CD4-positive, alpha-beta T cell (primary cell): ENCODE measurements at regions of chr10 and their contacts with region 1.

Region 1: DNA sequence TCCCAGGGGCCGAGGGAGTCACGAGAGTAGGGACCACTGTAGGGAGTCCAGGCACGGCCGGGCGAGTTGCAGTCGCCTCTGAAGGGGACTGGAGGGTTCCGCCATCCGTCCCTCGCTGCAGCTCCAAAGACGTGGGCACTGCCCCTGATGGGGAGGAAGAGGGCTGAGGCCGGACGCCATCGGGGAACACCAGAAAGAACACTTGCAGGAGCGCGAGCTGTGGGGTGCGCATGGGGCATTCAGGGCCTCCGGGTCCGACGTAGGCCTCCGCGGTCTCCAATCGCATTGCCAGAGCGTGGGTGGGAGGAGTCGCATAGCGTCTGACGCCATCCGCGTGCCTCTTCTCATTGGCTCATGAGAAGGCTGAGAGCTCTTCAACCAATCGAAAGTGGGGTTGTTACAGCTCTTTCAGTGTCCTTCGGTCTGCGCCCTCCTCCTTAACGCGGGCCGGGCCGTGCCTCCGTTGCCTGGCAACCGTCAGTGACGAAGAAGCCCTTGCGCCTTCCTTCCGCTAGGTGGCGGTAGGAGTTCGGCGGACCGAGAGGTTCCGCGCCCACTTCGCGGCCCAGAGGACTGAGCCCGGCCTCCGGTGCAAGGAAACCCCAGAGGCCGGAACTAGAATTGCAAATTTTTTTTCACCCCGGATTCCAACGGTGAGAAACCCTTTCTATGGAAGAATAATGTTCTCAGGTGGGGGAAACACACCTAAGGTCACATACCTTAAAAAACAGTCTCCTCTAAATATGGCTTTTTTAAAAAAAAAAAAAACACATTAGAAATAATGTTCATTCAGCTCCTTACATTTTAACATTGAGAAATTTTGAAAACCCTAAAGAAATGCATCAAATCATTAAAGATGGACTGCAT is at the start of gene TCTN3:
- DNase-seq: peak; percentile 89 to 100 (median 94)
- ATAC-seq: peak; percentile 95
- H3K4me3 ChIP-seq: peak within 1 kb of the TSS; percentile 68
- H3K4me3 Mint-ChIP-seq: peak within 1 kb of the TSS; percentile 98
- H3K27ac ChIP-seq: peak within 1 kb of the TSS; percentile 60 to 77
- H3K27ac Mint-ChIP-seq: peak within 1 kb of the TSS; percentile 94
- H3K4me1 ChIP-seq: peaks cover 19% of the 10 kb centered on the region
- H3K4me1 Mint-ChIP-seq: peaks cover 44% of the 10 kb centered on the region
- H3K27me3 ChIP-seq: no peaks in the 10 kb centered on the region
- H3K27me3 Mint-ChIP-seq: peaks cover 6% of the 10 kb centered on the region
- CTCF ChIP-seq: peak; percentile 99
- total RNA-seq, gene TCTN3: 18.6 to 20.2 TPM

Region 2: DNA sequence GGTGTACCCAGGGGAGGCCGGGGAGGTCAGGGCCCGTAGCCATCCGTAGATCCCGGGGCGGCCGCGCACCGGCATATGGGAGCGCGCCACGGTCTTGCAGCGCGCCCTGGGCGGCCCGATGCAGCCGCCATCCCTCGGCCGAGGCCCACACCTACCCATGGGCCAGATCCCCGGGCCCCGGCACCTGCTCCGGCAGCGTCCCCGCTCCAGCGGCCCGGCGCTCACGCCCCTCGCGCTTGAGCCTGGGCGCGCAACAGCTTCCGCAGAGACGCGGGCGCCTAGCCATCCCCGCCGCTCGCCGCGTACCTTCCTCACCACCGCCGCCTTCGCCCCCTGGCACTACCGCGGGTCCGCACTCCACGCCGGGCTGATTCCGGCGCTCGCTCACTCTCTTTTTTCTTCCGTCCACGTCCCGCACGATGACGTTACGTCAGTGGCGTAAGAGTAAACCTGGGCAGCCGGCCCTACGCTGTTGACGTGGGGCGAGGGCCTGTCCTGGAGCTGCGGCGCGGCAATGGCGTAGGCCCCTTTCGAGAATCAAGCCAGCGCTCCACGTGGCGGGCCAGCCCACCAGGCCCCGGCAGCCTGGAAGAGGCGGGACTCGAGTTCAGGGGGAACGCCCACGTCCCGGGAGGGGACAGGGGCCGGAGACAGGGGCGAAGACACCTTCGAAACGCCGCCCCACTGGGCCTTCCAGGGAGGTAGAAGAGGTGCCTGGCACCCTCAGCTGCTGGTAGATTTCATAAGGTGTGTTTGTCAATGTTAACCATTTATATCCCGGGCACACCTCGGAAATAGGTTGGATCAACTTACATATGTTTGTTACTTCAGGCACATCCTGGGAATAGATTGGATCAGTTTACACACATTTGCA is 37.4 kb before region 1 on chr10 and contains the start of gene ALDH18A1:
- CTCF ChIA-PET with region 1: interaction called, 9 read pairs
- POLR2A ChIA-PET with region 1: interaction called, 10 read pairs
- intact Hi-C with region 1: loop called (anchors 2 to 5 kb)
- DNase-seq: peak; percentile 79 to 95 (median 90)
- ATAC-seq: peak; percentile 90
- H3K4me3 ChIP-seq: peak within 1 kb of the TSS; percentile 70
- H3K4me3 Mint-ChIP-seq: peak within 1 kb of the TSS; percentile 100
- H3K27ac ChIP-seq: peak within 1 kb of the TSS in 1 of 2 donors; percentile 16
- H3K27ac Mint-ChIP-seq: peak within 1 kb of the TSS; percentile 86
- H3K4me1 ChIP-seq: peaks cover 18% of the 10 kb centered on the region
- H3K4me1 Mint-ChIP-seq: peaks cover 39% of the 10 kb centered on the region
- H3K27me3 ChIP-seq: no peaks in the 10 kb centered on the region
- H3K27me3 Mint-ChIP-seq: no peaks in the 10 kb centered on the region
- CTCF ChIP-seq: no peak
- total RNA-seq, gene ALDH18A1: 9.6 to 12.6 TPM

Region 3: GRCh38 chr10:95841661-95842498 is 148.0 kb after region 1 on chr10:
- CTCF ChIA-PET with region 1: interaction called, 32 read pairs
- POLR2A ChIA-PET with region 1: interaction called, 7 read pairs
- intact Hi-C with region 1: loop called (anchors 1 kb)
- DNase-seq: peak in 7 of 14 experiments; percentile 3 to 80 (median 51)
- ATAC-seq: peak; percentile 55
- H3K4me3 ChIP-seq: no peak overlapping the region
- H3K4me3 Mint-ChIP-seq: no peak overlapping the region
- H3K27ac ChIP-seq: no peak overlapping the region
- H3K27ac Mint-ChIP-seq: no peak overlapping the region
- H3K4me1 ChIP-seq: no peaks in the 10 kb centered on the region
- H3K4me1 Mint-ChIP-seq: peaks cover 6% of the 10 kb centered on the region
- H3K27me3 ChIP-seq: no peaks in the 10 kb centered on the region
- H3K27me3 Mint-ChIP-seq: no peaks in the 10 kb centered on the region
- CTCF ChIP-seq: peak; percentile 54

Region 4: DNA sequence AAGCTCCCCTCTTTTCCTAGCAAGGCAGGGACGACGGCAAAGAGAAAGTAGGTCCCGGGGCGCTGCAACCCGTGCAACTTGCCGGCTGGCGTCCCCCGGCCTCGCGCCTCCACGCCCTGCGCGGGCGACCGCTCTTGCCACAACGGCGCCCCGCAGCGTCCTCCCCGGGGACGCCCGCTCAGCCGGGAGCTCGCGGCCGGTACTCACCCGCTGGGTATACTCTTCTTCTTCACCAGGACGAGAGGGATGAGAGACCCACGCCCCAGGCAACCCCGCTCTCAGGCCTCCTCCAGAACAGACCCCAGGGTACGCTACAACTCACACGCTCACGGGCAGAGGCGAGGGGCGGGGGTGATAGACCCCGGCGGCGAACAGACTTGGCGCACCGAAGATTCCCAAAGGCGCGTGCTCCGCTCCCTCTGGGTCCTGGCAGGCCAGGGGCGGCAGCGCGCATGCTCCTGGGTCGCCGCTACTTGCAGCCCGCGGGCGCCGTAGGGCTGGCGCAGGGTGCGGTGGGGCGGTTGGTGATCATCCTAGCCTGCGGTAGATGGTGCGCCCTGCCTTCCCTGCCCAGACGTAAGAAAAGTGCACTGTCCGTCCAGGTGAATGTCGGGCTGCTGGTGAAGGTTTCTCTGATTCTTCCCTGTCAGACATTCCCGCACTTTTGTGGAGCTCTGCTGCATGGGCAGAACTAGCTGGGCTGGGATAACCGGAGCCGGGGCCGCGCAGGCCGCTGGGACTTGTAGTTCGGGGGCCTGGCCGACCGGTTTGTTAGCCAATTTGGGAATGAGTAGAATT is 213.8 kb after region 1 on chr10 and contains the start of gene CC2D2B:
- CTCF ChIA-PET with region 1: interaction called, 5 read pairs
- POLR2A ChIA-PET with region 1: interaction called, 14 read pairs
- intact Hi-C with region 1: loop called in 1 of 2 experiments (anchors 5 kb)
- DNase-seq: peak; percentile 24 to 75 (median 52)
- ATAC-seq: peak; percentile 80
- H3K4me3 ChIP-seq: peak within 1 kb of the TSS; percentile 83
- H3K4me3 Mint-ChIP-seq: peak within 1 kb of the TSS; percentile 86
- H3K27ac ChIP-seq: peak within 1 kb of the TSS; percentile 14 to 39
- H3K27ac Mint-ChIP-seq: peak within 1 kb of the TSS; percentile 39
- H3K4me1 ChIP-seq: peaks cover 3% of the 10 kb centered on the region
- H3K4me1 Mint-ChIP-seq: peaks cover 12% of the 10 kb centered on the region
- H3K27me3 ChIP-seq: no peaks in the 10 kb centered on the region
- H3K27me3 Mint-ChIP-seq: no peaks in the 10 kb centered on the region
- CTCF ChIP-seq: no peak
- total RNA-seq, gene CC2D2B: not detected

Region 5: GRCh38 chr10:96089670-96090462 is 396.0 kb after region 1 on chr10:
- CTCF ChIA-PET with region 1: interaction called, 20 read pairs
- POLR2A ChIA-PET with region 1: interaction called, 3 read pairs
- intact Hi-C with region 1: loop called in 1 of 2 experiments (anchors 5 kb)
- DNase-seq: peak; percentile 86 to 97 (median 90)
- ATAC-seq: peak; percentile 84
- H3K4me3 ChIP-seq: peak overlapping the region; percentile 78
- H3K4me3 Mint-ChIP-seq: peak overlapping the region; percentile 93
- H3K27ac ChIP-seq: peak overlapping the region; percentile 90 to 97
- H3K27ac Mint-ChIP-seq: peak overlapping the region; percentile 98
- H3K4me1 ChIP-seq: peaks cover 13% of the 10 kb centered on the region
- H3K4me1 Mint-ChIP-seq: peaks cover 16% of the 10 kb centered on the region
- H3K27me3 ChIP-seq: peaks cover 14 to 28% of the 10 kb centered on the region in 2 experiments
- H3K27me3 Mint-ChIP-seq: peaks cover 43% of the 10 kb centered on the region
- CTCF ChIP-seq: no peak

Region 6: GRCh38 chr10:96299383-96299782 is 605.5 kb after region 1 on chr10:
- CTCF ChIA-PET with region 1: no interaction called
- POLR2A ChIA-PET with region 1: no interaction called
- intact Hi-C with region 1: loop called in 1 of 2 experiments (anchors 5 kb)
- DNase-seq: peak in 12 of 14 experiments; percentile 4 to 53 (median 35)
- ATAC-seq: peak; percentile 92
- H3K4me3 ChIP-seq: peak overlapping the region; percentile 15
- H3K4me3 Mint-ChIP-seq: peak overlapping the region; percentile 63
- H3K27ac ChIP-seq: peak overlapping the region; percentile 13 to 47
- H3K27ac Mint-ChIP-seq: peak overlapping the region; percentile 89
- H3K4me1 ChIP-seq: peaks cover 33% of the 10 kb centered on the region
- H3K4me1 Mint-ChIP-seq: peaks cover 84% of the 10 kb centered on the region
- H3K27me3 ChIP-seq: peaks cover 0 to 6% of the 10 kb centered on the region in 2 experiments
- H3K27me3 Mint-ChIP-seq: peaks cover 12% of the 10 kb centered on the region
- CTCF ChIP-seq: no peak